Endothelial cell of umbilical vein (primary cell): ENCODE measurements at regions of chr19 and their contacts with region 1.

Region 1: GRCh38 chr19:56261145-56261544 is 11.4 kb upstream of the EDDM13 start:
- DNase-seq: peak; percentile 13
- H3K4me3 ChIP-seq: no peak overlapping the region
- H3K27ac ChIP-seq: peak overlapping the region; percentile 6
- H3K4me1 ChIP-seq: peaks cover 6% of the 10 kb centered on the region
- H3K27me3 ChIP-seq: no peaks in the 10 kb centered on the region
- CTCF ChIP-seq: no peak
- POLR2A ChIP-seq: no peak

Region 2: GRCh38 chr19:56066152-56067023 is 194.8 kb before region 1 on chr19:
- CTCF ChIA-PET with region 1: interaction called, 10 read pairs
- POLR2A ChIA-PET with region 1: no interaction called
- dilution Hi-C with region 1: no loop called
- intact Hi-C with region 1: no loop called
- DNase-seq: peak; percentile 54
- H3K4me3 ChIP-seq: peak overlapping the region in 2 of 3 experiments; percentile 20 to 32
- H3K27ac ChIP-seq: no peak overlapping the region
- H3K4me1 ChIP-seq: peaks cover 7% of the 10 kb centered on the region
- H3K27me3 ChIP-seq: no peaks in the 10 kb centered on the region
- CTCF ChIP-seq: peak; percentile 91 to 95
- POLR2A ChIP-seq: no peak

Region 3: GRCh38 chr19:56088462-56089215 is 172.5 kb before region 1 on chr19:
- CTCF ChIA-PET with region 1: no interaction called
- POLR2A ChIA-PET with region 1: no interaction called
- dilution Hi-C with region 1: no loop called
- intact Hi-C with region 1: no loop called
- DNase-seq: no peak
- H3K4me3 ChIP-seq: no peak overlapping the region
- H3K27ac ChIP-seq: no peak overlapping the region
- H3K4me1 ChIP-seq: no peaks in the 10 kb centered on the region
- H3K27me3 ChIP-seq: no peaks in the 10 kb centered on the region
- CTCF ChIP-seq: no peak
- POLR2A ChIP-seq: no peak

Region 4: DNA sequence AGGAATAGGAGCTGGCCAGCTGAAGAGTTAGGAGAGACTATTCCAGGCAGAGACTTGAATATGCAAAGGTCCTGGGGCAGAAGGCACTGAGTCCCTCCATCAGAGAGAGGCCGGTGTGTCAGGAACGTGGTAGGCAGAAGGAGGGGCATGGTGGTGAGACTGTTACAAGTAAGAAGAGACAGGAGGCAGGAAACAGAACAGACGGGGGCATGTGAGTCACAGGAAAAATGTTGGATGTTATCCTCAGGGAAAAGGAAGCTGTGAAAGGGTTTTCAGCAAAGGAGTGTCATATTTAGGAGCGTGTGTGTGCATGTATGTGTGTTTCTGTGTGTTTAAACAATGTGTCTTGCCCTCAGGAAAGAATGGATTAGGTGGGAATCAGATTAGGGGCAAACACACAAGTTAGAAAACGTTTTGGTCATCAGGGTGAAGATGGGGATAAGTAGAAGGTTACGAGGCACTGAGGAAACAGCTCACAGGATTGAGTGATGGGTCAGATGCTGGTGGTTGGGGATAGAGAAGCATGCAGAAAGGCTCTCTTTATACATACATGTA is 12.5 kb after region 1 on chr19:
- CTCF ChIA-PET with region 1: interaction called, 12 read pairs
- POLR2A ChIA-PET with region 1: no interaction called
- dilution Hi-C with region 1: no loop called
- intact Hi-C with region 1: no loop called
- DNase-seq: peak; percentile 80
- H3K4me3 ChIP-seq: no peak overlapping the region
- H3K27ac ChIP-seq: peak overlapping the region; percentile 64
- H3K4me1 ChIP-seq: peaks cover 27% of the 10 kb centered on the region
- H3K27me3 ChIP-seq: no peaks in the 10 kb centered on the region
- CTCF ChIP-seq: no peak
- POLR2A ChIP-seq: no peak

Region 5: DNA sequence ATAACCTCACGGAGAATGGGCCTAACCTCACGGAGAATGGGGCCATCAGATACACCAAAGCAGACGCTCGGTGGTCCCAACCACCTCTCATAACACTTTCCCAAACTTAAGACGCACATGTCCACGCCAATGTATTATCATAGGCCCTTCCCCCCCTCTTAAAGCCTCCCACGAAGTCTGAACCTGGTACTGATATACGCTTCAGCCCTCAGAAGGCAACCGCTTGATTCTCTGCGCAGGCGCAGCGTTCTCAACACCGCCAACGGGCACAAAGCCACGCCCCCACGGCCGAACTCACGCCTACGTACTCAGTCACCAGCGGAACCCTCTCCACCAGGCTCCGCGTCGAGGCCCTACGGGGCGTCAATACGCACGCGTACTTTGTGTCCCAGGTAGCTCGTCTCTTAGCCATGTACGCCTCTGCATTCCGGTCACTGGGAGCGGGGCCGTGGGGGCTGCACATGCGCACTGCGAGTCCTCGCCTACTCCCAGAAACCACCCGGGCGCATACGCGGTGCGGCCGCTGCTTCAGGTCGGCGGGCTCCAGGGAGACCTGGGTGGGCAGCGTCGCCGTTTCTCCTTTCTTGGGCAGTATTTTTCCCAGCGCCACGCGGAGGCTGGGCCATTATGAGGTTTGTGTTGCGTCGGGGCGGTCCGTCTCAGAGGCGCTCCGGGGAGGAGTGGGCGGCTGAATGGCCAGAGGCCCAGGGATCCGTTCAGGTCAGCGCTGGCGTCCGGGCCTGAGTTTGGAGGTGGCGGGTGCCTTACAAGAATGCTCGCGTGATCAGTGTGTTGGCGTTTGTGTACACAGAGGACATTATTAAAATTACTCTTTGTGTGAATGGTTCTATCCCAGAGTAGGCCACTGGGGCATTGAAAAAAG is 106.9 kb after region 1 on chr19:
- CTCF ChIA-PET with region 1: no interaction called
- POLR2A ChIA-PET with region 1: no interaction called
- dilution Hi-C with region 1: no loop called
- intact Hi-C with region 1: no loop called
- DNase-seq: peak; percentile 98
- H3K4me3 ChIP-seq: peak overlapping the region; percentile 29 to 89 (median 88)
- H3K27ac ChIP-seq: peak overlapping the region; percentile 7
- H3K4me1 ChIP-seq: peaks cover 7% of the 10 kb centered on the region
- H3K27me3 ChIP-seq: no peaks in the 10 kb centered on the region
- CTCF ChIP-seq: no peak
- POLR2A ChIP-seq: peak; percentile 64

Region 6: GRCh38 chr19:56642711-56643459 is 381.7 kb after region 1 on chr19 and contains the start of gene SMIM17:
- CTCF ChIA-PET with region 1: no interaction called
- POLR2A ChIA-PET with region 1: no interaction called
- dilution Hi-C with region 1: no loop called
- intact Hi-C with region 1: no loop called
- DNase-seq: no peak
- H3K4me3 ChIP-seq: no peak within 1 kb of the TSS
- H3K27ac ChIP-seq: no peak within 1 kb of the TSS
- H3K4me1 ChIP-seq: no peaks in the 10 kb centered on the region
- H3K27me3 ChIP-seq: no peaks in the 10 kb centered on the region
- CTCF ChIP-seq: no peak
- POLR2A ChIP-seq: no peak
- total RNA-seq, gene SMIM17: 0.30 and 1.4 TPM in 2 replicates

Region 7: GRCh38 chr19:56838909-56839651 is 577.9 kb after region 1 on chr19:
- CTCF ChIA-PET with region 1: no interaction called
- POLR2A ChIA-PET with region 1: no interaction called
- dilution Hi-C with region 1: no loop called
- intact Hi-C with region 1: no loop called
- DNase-seq: peak; percentile 16
- H3K4me3 ChIP-seq: no peak overlapping the region
- H3K27ac ChIP-seq: no peak overlapping the region
- H3K4me1 ChIP-seq: no peaks in the 10 kb centered on the region
- H3K27me3 ChIP-seq: no peaks in the 10 kb centered on the region
- CTCF ChIP-seq: no peak
- POLR2A ChIP-seq: no peak